ENCODE measurements at regions of chr9 and their contacts with region 1.

Region 1: DNA sequence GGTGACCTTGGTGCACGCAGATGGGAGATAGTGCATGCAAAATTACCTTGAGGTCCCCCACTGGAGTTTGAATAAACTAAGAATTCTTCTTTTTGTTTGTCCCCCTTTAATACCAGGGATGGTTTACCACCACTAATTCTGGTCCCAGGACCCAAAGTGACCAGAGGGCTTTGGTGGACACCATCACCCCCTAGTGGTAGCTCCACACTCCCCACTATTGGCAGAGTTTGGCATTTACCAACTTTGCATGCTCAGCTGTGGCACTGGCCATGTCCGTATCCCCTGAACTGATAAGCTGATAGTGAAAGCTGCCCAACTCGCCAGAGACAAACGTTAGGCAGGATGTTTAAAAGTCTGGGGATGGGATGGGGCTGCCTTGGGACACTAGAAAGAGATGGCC is 3.3 kb downstream of the ASTN2 start:
- DNase-seq: peak; percentile 80
- ATAC-seq: peak; percentile 46
- H3K4me3 Mint-ChIP-seq: peak overlapping the region; percentile 53
- H3K27ac Mint-ChIP-seq: no peak overlapping the region
- H3K4me1 Mint-ChIP-seq: peaks cover 41% of the 10 kb centered on the region
- H3K27me3 Mint-ChIP-seq: peaks cover 28% of the 10 kb centered on the region
- CTCF ChIP-seq: peak; percentile 82

Region 2: DNA sequence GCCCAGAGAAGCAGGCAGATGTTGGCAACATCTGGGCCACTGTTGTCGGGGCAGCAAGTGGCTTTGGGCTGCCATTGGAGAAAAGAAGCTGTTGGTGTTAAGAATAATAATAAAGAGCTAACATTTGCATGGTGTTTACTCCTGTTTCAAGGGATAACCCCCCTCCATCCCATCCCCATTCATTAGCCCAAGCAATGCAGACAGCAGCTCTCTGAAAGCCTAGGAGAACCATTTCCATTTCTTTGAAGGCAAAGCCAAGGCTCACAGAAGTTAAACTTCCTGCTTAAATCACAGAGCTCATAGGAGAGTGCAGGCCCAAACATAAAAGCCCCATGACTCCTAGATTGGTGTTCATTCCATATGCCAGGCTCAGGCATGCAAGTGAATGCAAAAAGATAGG is 172.1 kb before region 1 on chr9:
- CTCF ChIA-PET with region 1: interaction called, 11 read pairs
- POLR2A ChIA-PET with region 1: no interaction called
- DNase-seq: no peak
- ATAC-seq: peak; percentile 73
- H3K4me3 Mint-ChIP-seq: no peak overlapping the region
- H3K27ac Mint-ChIP-seq: no peak overlapping the region
- H3K4me1 Mint-ChIP-seq: peaks cover 13% of the 10 kb centered on the region
- H3K27me3 Mint-ChIP-seq: peaks cover 4% of the 10 kb centered on the region; the same call in 1 of the 2 replicates
- CTCF ChIP-seq: no peak

Region 3: GRCh38 chr9:117293206-117294114 is 118.1 kb before region 1 on chr9:
- CTCF ChIA-PET with region 1: interaction called, 14 read pairs
- POLR2A ChIA-PET with region 1: no interaction called
- DNase-seq: no peak
- ATAC-seq: no peak
- H3K4me3 Mint-ChIP-seq: no peak overlapping the region
- H3K27ac Mint-ChIP-seq: no peak overlapping the region
- H3K4me1 Mint-ChIP-seq: peaks cover 8% of the 10 kb centered on the region
- H3K27me3 Mint-ChIP-seq: no peaks in the 10 kb centered on the region
- CTCF ChIP-seq: no peak

Region 4: DNA sequence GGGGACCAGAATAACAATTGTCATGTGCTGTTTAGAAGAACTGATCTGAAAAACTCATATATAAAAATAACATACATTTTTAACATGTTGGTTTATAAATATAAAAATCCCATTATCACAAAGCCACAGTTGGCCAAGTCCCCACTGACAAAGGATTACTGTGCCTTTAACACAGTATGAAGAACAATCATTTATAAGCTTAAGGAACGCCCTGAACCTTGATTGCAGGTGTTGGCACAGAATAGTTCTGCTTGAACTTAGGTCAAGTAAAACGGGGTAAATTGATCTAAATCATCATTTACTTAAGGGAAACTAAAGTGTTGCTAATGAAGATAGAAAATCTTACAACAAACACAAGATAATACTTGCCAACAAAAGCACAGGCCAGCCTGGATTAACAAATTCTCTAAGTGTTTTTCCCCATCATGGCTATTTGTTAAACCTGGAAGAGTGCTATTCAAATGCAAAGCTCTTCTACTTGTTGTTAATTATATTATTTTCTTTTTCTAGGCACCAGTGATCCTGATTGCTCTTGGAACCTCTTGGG is 42.8 kb before region 1 on chr9:
- CTCF ChIA-PET with region 1: interaction called, 10 read pairs
- POLR2A ChIA-PET with region 1: no interaction called
- DNase-seq: no peak
- ATAC-seq: peak; percentile 34; the same call in 1 of the 2 replicates
- H3K4me3 Mint-ChIP-seq: no peak overlapping the region
- H3K27ac Mint-ChIP-seq: no peak overlapping the region
- H3K4me1 Mint-ChIP-seq: peaks cover 49% of the 10 kb centered on the region
- H3K27me3 Mint-ChIP-seq: no peaks in the 10 kb centered on the region
- CTCF ChIP-seq: no peak

Region 5: GRCh38 chr9:117392992-117393391 is 18.6 kb before region 1 on chr9:
- CTCF ChIA-PET with region 1: interaction called, 37 read pairs
- POLR2A ChIA-PET with region 1: interaction called, 5 read pairs
- DNase-seq: peak; percentile 55
- ATAC-seq: peak; percentile 95
- H3K4me3 Mint-ChIP-seq: no peak overlapping the region
- H3K27ac Mint-ChIP-seq: no peak overlapping the region
- H3K4me1 Mint-ChIP-seq: peaks cover 15% of the 10 kb centered on the region
- H3K27me3 Mint-ChIP-seq: no peaks in the 10 kb centered on the region
- CTCF ChIP-seq: no peak

Region 6: DNA sequence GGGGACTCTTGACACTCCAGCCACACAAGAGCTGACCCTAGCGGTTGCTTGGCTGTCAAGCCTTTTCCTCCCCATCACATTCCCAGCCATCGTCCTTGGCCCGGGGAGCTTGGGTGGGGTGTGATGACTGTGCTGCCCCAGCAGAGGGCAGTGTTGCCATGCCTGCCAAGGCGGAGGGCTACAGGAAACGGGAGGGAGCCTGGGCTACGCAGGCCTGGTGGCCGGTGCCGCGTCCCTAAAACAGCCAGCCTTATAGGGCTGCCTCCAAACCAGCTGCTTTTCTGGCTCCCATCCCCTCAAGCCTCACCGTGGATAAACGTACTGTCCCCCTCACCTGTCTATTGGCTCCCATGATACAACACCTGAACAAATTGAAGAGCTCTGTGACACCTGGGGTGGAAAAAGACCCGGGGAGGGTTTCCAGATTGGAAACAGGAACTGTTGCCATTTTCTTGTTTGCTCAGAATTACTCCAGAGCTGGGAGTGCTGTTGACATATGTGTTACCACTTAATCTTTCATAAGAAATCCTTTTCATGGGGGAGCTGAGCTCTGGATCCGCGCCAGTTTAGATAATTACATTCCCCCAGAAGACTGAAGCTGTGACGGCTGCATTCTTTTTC is 76.1 kb after region 1 on chr9:
- CTCF ChIA-PET with region 1: interaction called, 14 read pairs
- POLR2A ChIA-PET with region 1: no interaction called
- DNase-seq: peak; percentile 90
- ATAC-seq: peak; percentile 98
- H3K4me3 Mint-ChIP-seq: peak overlapping the region; percentile 42
- H3K27ac Mint-ChIP-seq: no peak overlapping the region
- H3K4me1 Mint-ChIP-seq: peaks cover 23% of the 10 kb centered on the region
- H3K27me3 Mint-ChIP-seq: peaks cover 5% of the 10 kb centered on the region
- CTCF ChIP-seq: peak; percentile 93

Measured in WTC11 (cell line).